Right ventricle myocardium inferior (tissue), 1 donor: ENCODE measurements at regions of chr3 and their contacts with region 1.

Region 1: GRCh38 chr3:14947886-14948555 is 638 bp downstream of the NR2C2 start:
- DNase-seq: peak; percentile 98
- ATAC-seq: peak; percentile 98

Region 2: GRCh38 chr3:14741510-14741909 is 206.5 kb before region 1 on chr3:
- intact Hi-C with region 1: no loop called
- DNase-seq: no peak
- ATAC-seq: no peak

Region 3: DNA sequence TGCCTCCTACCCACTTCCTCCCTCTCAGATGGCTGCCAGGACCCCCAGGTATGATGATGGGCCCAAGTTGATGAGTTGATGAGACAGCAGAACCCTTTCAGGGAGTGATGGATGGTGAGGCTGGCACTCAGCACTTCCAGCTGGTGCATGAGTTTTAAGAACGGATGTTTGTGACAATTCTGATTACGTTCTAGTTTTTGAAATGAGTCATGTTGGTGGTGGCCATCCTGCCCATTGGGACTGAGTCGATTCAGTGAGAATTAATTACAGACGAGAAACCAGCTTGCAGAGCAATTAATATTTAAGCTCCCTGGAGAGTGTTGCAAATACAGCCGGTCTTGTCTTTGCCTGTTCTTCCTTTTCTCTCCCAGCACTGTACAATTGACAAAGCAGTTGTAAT is 57.5 kb before region 1 on chr3:
- intact Hi-C with region 1: no loop called
- DNase-seq: no peak
- ATAC-seq: no peak

Region 4: GRCh38 chr3:14989943-14990779 is 42.1 kb after region 1 on chr3:
- intact Hi-C with region 1: loop called (anchors 5 kb)
- DNase-seq: no peak
- ATAC-seq: peak; percentile 94

Region 5: DNA sequence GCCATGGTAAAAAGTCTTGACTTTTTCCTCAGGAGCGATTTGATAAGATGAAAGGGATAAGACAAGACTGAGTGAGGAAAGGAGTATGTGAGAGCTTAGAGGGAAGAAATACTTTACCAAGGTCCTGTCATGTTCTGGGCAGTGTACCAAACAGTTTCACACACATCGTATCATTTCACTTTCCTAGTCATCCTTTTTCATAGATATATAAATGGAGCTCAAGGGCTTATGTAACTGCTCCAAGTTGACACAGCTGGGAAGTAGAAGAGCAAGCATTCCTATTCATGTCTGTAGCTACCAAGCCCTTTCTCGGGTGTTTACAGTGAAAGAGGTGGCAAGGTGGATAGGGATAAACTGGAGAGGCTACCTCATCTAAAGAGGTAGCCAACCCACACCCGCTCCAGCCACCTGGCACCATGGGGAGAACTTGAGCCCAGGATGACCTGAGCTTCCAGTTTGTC is 59.7 kb after region 1 on chr3:
- intact Hi-C with region 1: loop called (anchors 5 kb)
- DNase-seq: no peak
- ATAC-seq: peak; percentile 68

Region 6: DNA sequence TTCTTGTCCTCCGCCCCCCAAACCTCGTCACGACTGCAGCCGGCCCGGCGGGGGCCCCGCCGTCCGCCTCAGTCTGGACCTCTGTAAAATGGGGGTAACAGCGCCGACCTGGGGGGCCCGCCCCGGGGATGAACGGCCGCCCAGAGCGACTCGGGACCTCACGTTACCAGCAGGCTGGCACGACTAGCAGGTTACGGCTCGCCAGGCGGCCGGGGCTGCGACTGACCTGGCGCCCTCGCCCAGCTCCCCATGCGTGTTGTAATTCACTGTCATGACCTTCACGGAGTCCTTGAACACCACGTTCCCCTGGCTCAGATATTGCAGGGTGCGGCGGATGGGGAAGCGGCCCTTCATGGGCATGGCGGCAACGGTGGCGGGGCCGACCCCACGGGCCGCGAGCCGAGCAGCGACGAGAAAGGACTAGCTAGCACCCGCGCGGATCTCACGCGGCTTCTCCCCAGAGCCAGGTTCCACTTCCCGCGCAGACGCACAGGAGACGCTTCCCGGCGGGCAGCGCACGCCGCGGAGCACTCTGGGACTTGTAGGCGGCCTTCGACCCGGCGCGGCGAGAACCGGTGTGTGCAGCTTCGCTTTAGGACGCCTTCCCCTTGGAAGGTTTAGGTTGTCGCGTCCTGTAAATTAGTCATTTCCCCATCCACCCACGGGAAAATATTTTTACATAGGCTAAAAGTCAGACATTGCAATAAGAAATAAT is 117.0 kb after region 1 on chr3 and contains the start of gene MRPS25:
- intact Hi-C with region 1: loop called (anchors 1 kb)
- DNase-seq: peak; percentile 98
- ATAC-seq: peak; percentile 98
- total RNA-seq, gene MRPS25: 140 TPM

Region 7: GRCh38 chr3:15098503-15099363 is 150.7 kb after region 1 on chr3 and contains the start of gene RBSN:
- intact Hi-C with region 1: loop called (anchors 1 kb)
- DNase-seq: peak; percentile 98
- ATAC-seq: peak; percentile 78
- total RNA-seq, gene RBSN: 16.5 TPM

Region 8: GRCh38 chr3:15205934-15206661 is 258.1 kb after region 1 on chr3 and contains the start of gene CAPN7:
- intact Hi-C with region 1: loop called (anchors 10 kb)
- DNase-seq: peak; percentile 99
- ATAC-seq: peak; percentile 99
- total RNA-seq, gene CAPN7: 28.2 TPM